ENCODE measurements at regions of chr5 and their contacts with region 1.

Region 1: GRCh38 chr5:142713121-142713706 is 27.3 kb upstream of the FGF1 start:
- DNase-seq: peak; percentile 96
- ATAC-seq: peak; percentile 58
- H3K4me3 Mint-ChIP-seq: peak overlapping the region; percentile 51
- H3K27ac Mint-ChIP-seq: peak overlapping the region; percentile 57; the same call in 1 of the 2 replicates
- H3K4me1 Mint-ChIP-seq: peaks cover 55% of the 10 kb centered on the region
- H3K27me3 Mint-ChIP-seq: peaks cover 3% of the 10 kb centered on the region; the same call in 1 of the 2 replicates
- CTCF ChIP-seq: peak; percentile 99

Region 2: DNA sequence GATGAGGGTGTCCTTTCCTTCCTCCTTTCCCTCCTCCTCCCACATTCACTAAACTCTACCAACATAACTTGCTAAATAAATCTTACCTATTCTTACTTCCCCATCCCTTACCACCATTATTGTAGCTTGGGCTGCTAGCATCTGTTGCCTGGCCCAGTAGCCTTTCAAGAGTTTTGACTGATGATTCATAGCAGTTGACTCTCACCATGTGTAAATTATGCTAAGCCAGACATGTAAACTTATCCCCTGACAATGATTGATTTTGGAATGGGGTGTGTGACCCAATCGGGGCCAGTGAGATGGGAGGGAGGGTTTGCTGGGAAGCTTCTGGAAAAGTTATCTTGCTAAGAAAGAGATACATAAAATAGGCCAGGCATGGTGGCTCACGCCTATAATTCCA is 226.6 kb before region 1 on chr5:
- CTCF ChIA-PET with region 1: no interaction called
- POLR2A ChIA-PET with region 1: no interaction called
- DNase-seq: no peak
- ATAC-seq: no peak
- H3K4me3 Mint-ChIP-seq: no peak overlapping the region
- H3K27ac Mint-ChIP-seq: no peak overlapping the region
- H3K4me1 Mint-ChIP-seq: peaks cover 12% of the 10 kb centered on the region
- H3K27me3 Mint-ChIP-seq: peaks cover 2% of the 10 kb centered on the region; the same call in 1 of the 2 replicates
- CTCF ChIP-seq: no peak

Region 3: GRCh38 chr5:142540922-142541422 is 172.2 kb before region 1 on chr5:
- CTCF ChIA-PET with region 1: no interaction called
- POLR2A ChIA-PET with region 1: no interaction called
- DNase-seq: no peak
- ATAC-seq: no peak
- H3K4me3 Mint-ChIP-seq: no peak overlapping the region
- H3K27ac Mint-ChIP-seq: no peak overlapping the region
- H3K4me1 Mint-ChIP-seq: peaks cover 43% of the 10 kb centered on the region
- H3K27me3 Mint-ChIP-seq: no peaks in the 10 kb centered on the region
- CTCF ChIP-seq: no peak

Region 4: DNA sequence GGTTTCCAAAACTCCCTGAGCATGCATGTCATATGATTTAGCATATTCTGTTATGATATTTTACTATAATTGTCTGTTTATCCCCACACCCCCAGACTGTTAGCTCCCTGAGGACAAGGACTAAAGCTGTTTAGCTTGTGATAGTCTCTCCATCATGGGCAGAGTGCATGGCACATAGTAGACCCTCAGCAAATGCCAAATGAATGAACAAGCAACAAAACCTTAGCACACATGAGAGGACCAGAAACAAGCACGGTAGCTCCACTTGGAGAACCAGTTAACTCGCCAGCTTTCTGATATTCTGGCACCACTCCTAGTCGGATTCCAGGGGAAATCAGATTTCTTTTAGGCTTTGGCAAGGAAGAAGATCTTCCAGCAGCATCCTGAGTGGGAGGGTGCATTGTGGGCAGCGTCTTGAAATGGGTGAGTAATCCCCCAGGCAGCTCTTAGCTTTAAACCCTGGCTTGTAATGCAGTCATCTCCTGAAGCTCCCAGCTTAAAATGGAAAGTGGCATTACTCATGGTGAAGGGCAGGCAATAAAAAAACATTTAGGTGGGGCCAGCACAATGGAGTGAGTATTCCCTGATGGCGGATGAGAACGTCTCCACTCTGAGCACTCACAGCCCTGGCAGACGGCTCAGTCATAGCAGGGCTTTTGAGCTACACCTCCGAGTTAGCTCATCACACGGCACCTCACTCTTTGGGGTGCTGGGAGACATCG is 68.4 kb before region 1 on chr5:
- CTCF ChIA-PET with region 1: interaction called, 12 read pairs
- POLR2A ChIA-PET with region 1: no interaction called
- DNase-seq: no peak
- ATAC-seq: no peak
- H3K4me3 Mint-ChIP-seq: no peak overlapping the region
- H3K27ac Mint-ChIP-seq: peak overlapping the region; percentile 5; the same call in 1 of the 2 replicates
- H3K4me1 Mint-ChIP-seq: peaks cover 29% of the 10 kb centered on the region
- H3K27me3 Mint-ChIP-seq: no peaks in the 10 kb centered on the region
- CTCF ChIP-seq: no peak

Region 5: GRCh38 chr5:142690667-142691066 is 22.5 kb before region 1 on chr5:
- CTCF ChIA-PET with region 1: interaction called, 30 read pairs
- POLR2A ChIA-PET with region 1: no interaction called
- DNase-seq: no peak
- ATAC-seq: no peak
- H3K4me3 Mint-ChIP-seq: no peak overlapping the region
- H3K27ac Mint-ChIP-seq: no peak overlapping the region
- H3K4me1 Mint-ChIP-seq: peaks cover 24% of the 10 kb centered on the region
- H3K27me3 Mint-ChIP-seq: no peaks in the 10 kb centered on the region
- CTCF ChIP-seq: no peak

Region 6: DNA sequence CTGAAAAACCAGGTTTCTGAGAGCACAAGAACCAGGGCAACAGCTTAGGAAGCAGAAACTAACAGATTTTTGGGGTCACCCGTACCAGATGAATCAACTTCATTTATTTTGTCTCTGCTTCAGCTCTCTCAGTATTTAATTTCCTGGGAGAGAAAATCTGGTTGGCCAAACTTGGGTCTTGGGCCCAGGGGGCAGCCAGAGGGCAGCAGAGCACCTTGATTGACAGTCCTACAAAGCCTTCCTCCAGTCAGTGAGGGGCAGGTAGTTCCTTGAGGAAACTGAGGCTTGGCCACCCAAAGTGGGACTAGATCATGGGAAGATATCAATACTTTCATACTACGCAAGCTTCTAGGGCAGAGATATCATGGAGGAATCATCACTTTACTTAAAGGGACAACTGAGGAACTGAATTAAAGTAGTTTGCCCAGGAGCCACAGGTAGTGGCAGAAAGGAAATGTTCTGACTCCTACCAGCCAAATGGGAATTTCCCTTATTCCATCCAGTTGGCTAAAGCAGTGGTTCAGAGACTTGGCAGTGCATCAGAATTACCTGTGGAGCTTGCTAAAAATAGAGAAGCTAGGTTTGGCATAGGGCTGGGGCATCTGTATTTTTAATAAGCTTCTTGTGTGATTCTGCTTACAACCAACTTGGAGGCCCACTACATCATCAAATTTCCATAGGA is 35.5 kb after region 1 on chr5:
- CTCF ChIA-PET with region 1: interaction called, 38 read pairs
- POLR2A ChIA-PET with region 1: no interaction called
- DNase-seq: peak; percentile 53
- ATAC-seq: peak; percentile 75
- H3K4me3 Mint-ChIP-seq: no peak overlapping the region
- H3K27ac Mint-ChIP-seq: no peak overlapping the region
- H3K4me1 Mint-ChIP-seq: peaks cover 7% of the 10 kb centered on the region
- H3K27me3 Mint-ChIP-seq: no peaks in the 10 kb centered on the region
- CTCF ChIP-seq: peak; percentile 51; the same call in 1 of the 2 replicates

Region 7: DNA sequence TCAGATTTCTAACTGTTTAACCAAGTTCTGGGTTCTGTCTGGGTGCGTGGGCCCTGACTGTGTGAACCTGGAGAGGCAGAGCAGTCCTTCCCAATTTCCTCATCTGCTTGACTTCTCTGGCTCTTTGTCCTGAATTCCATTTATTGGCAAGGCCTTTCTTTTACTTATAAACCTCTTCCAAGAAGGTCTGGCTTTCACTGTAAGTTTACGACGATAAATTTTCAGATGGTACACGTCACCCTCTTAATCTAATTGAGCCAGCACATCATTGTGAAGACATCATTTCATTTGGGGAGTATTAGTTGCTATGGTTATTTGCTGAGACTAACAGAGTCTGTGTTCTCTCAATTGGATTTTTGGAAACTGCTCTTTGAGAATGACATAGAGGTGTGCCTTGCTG is 149.4 kb after region 1 on chr5:
- CTCF ChIA-PET with region 1: interaction called, 30 read pairs
- POLR2A ChIA-PET with region 1: no interaction called
- DNase-seq: no peak
- ATAC-seq: no peak
- H3K4me3 Mint-ChIP-seq: no peak overlapping the region
- H3K27ac Mint-ChIP-seq: peak overlapping the region; percentile 88
- H3K4me1 Mint-ChIP-seq: peaks cover 83% of the 10 kb centered on the region
- H3K27me3 Mint-ChIP-seq: no peaks in the 10 kb centered on the region
- CTCF ChIP-seq: no peak

Region 8: DNA sequence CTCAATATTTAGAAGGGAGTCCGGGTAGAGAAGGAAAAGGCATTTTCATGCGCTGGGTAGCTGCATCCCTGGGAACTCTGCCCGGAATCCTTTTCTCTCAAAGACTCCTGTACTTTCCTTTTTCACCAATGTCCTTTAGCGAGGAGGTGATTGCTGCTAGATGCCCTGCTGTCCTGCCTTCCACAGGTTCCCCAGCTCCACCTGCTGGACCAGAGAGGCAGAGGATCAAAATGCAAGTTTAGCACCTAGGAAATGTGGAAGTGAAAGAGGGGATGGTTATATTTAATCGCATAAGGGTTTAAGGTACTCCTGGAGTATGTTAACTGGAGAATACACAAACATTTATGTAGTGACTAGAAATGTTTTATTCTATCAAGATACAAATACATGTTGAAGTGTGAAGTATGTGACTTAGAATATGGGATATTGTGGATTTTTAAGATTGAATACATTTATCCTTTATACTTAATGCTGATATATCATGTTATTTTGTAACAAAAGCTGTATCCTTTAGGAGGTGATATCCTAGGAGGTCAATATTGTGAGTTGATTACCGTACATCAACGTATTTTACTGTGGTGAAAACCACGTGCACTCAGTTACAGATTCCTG is 202.7 kb after region 1 on chr5:
- CTCF ChIA-PET with region 1: interaction called, 33 read pairs
- POLR2A ChIA-PET with region 1: no interaction called
- DNase-seq: peak; percentile 70
- ATAC-seq: peak; percentile 92
- H3K4me3 Mint-ChIP-seq: no peak overlapping the region
- H3K27ac Mint-ChIP-seq: peak overlapping the region; percentile 94; the same call in 1 of the 2 replicates
- H3K4me1 Mint-ChIP-seq: peaks cover 14% of the 10 kb centered on the region
- H3K27me3 Mint-ChIP-seq: no peaks in the 10 kb centered on the region
- CTCF ChIP-seq: peak; percentile 52; the same call in 1 of the 2 replicates